KBM-7 (cell line): ENCODE measurements at regions of chr17 and their contacts with region 1.

Region 1: DNA sequence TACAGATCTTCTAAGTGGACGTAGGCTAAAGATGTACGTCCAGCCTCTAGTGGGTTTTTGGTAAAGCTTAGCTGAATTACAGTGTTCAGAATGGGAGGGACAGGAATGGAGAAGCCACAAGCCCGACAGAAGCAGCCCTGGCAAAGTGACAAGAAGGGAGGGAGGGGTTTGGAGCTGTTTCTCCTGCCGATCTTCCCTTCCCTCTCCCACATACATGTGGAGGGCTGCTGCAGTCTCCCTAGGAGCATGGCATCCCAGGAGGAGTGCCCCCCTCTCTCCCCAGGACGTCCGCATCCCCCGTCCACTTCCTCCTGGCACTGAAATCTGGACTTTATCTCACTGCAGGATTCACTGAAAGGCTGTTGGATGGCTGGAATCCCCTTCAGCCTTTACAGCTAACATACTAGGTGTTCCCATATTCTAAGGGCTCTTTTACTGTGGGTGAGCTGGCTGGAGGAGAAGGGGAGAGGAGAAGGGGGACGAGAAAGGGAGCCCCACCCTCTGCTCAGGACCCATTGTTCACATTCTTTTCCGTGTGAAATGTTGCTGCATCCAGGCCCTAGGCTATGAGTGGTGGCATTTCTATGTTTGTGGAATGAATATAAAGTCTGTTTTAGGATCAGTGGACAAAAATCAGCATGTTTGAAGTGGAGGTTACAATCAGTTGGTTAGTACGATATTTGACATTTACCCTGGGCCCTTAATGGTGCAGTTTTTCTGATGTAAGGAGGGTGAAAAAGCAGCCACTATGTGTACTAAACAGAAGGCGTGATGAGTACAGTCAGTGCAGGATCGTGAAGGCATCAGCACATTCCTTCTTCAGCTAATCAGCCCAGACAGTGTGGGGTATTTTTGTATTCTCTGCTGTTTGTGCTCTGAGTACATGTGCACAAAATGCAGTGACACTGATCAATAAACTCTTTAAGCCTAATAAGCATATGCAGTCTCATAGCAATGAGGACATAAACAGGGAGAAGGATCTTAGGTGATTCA is 94.6 kb downstream of the SPECC1 start:
- DNase-seq: no peak

Region 2: GRCh38 chr17:19753049-19753444 is 350.7 kb before region 1 on chr17:
- in situ Hi-C with region 1: no loop called
- DNase-seq: no peak

Region 3: GRCh38 chr17:19992803-19993713 is 110.7 kb before region 1 on chr17:
- in situ Hi-C with region 1: loop called (anchors 10 kb)
- DNase-seq: peak; percentile 92

Region 4: GRCh38 chr17:20032636-20033035 is 71.1 kb before region 1 on chr17:
- in situ Hi-C with region 1: no loop called
- DNase-seq: peak; percentile 38